ENCODE measurements at regions of chr14 and their contacts with region 1.

Region 1: GRCh38 chr14:71060825-71061455 is 153.7 kb downstream of the PCNX1 start:
- DNase-seq: no peak
- H3K4me3 Mint-ChIP-seq: no peak overlapping the region
- H3K27ac Mint-ChIP-seq: no peak overlapping the region
- H3K4me1 Mint-ChIP-seq: no peaks in the 10 kb centered on the region
- H3K27me3 Mint-ChIP-seq: no peaks in the 10 kb centered on the region
- CTCF ChIP-seq: no peak

Region 2: GRCh38 chr14:71076466-71077092 is 15.6 kb after region 1 on chr14:
- CTCF ChIA-PET with region 1: interaction called, 3 read pairs
- POLR2A ChIA-PET with region 1: interaction called, 11 read pairs
- intact Hi-C with region 1: no loop called
- DNase-seq: peak; percentile 22
- H3K4me3 Mint-ChIP-seq: no peak overlapping the region
- H3K27ac Mint-ChIP-seq: peak overlapping the region; percentile 83
- H3K4me1 Mint-ChIP-seq: no peaks in the 10 kb centered on the region
- H3K27me3 Mint-ChIP-seq: no peaks in the 10 kb centered on the region
- CTCF ChIP-seq: no peak